GM10248 (cell line): ENCODE measurements at regions of chr11 and their contacts with region 1.

Region 1: GRCh38 chr11:73177778-73178577 is 35.9 kb upstream of the FCHSD2 start:
- DNase-seq: peak; percentile 90
- CTCF ChIP-seq: peak; percentile 81

Region 2: GRCh38 chr11:72722050-72722748 is 455.8 kb before region 1 on chr11:
- CTCF ChIA-PET with region 1: interaction called, 61 read pairs
- POLR2A ChIA-PET with region 1: no interaction called
- DNase-seq: peak; percentile 94
- CTCF ChIP-seq: no peak

Region 3: GRCh38 chr11:72840780-72841179 is 337.2 kb before region 1 on chr11:
- CTCF ChIA-PET with region 1: interaction called, 15 read pairs
- POLR2A ChIA-PET with region 1: interaction called, 3 read pairs
- DNase-seq: no peak
- CTCF ChIP-seq: no peak

Region 4: DNA sequence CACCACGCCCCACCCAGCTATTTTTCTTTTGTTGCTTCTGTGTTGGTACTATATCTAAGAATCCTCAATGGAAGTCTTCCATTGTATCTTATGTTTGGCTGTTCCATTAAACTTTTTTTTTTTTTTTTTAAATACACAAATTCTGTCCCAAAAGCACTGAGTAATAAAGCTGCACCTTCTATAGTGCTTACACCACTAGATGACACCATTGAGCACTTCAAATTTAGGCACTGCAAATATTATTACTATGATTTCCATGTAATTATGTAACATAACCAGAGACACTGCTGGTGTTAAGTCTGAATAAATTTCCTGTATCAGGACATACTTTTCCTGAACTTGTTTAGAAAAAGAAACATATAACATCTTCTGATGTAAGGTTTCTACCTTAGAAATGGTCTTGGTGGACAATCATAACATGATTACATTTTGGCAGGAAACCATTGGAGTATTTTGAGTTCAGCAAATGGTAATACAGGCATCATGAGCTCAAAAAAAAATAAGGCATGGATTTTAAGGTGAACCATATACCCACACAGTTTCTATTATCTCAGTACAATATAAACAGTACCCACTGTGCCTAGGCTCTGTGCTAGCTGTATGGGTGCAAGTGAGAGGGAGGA is 253.3 kb before region 1 on chr11:
- CTCF ChIA-PET with region 1: interaction called, 22 read pairs
- POLR2A ChIA-PET with region 1: no interaction called
- DNase-seq: peak; percentile 31
- CTCF ChIP-seq: peak; percentile 48

Region 5: DNA sequence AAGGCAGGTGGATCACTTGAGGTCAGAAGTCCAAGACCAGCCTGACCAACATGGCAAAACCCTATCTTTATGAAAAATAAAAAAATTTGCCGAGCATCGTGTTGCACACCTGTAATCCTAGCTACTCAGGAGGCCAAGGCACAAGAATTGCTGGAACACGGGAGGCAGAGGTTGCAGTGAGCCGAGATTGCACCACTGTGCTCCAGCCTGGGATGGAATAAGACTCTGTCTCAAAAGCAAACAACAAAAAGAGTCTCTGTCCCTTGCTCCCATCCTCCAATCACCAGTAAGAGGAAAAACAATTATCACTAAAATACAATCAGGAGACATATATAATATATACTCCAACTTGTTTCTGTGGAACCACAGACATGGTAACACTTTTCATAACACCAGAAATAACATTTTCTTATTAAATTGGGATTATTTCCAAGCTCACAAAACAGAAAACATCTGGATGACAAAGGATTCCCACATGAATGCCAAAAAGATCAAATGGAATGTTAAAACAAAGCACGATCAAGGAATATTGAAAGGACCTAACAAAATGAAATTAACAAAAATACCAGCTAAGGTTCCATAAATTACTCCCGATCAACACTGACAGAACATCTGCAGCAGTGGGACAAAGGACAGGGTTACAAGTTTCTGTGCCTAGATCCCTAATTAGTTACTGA is 51.0 kb before region 1 on chr11:
- CTCF ChIA-PET with region 1: no interaction called
- POLR2A ChIA-PET with region 1: no interaction called
- DNase-seq: no peak
- CTCF ChIP-seq: no peak

Region 6: DNA sequence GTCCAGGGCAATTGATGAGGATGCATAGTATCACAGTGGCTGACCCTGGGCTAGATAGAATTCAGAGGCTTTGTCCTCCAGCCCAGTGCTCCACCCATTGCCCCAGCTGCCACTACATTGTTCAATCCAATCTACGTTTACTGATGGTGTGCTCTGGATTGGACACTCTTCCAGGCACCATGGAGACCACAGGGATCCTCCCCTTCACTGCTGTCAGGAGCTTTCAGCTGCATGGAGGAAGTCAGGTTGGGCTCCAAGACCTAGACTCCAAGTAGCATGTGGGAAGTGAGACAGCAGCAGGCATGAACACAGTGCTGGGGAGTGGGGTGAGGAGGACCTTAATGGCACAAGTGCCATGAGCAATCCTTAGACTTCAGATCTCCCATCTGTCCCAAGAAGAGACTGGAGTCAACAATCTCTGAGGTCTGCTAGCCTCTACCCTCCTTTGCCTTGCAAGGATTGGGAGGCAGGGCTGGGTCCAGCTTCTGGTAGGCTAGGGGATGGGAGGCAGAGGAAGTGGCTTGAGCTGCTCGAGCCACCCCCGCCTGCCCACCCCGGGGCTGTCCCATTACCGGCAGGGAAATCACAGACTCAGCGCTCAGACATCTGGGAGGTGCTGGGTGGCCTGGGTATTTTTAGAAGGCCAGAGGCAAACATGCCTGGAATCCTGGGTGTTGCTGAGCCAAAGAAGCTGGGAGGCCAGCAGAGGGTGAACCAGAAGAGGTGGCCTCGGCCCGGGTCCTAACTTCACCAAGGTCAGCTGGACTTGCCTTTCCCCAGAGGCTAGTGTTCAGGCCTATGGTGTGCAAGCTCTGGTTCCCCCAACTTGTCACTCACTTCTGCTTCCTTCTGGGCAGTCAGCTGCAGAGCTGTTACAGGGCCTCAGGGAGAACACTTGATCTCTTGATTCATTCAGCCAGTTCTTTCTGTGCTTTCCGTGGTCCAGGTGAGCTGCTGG is 20.6 kb before region 1 on chr11:
- CTCF ChIA-PET with region 1: interaction called, 115 read pairs
- POLR2A ChIA-PET with region 1: no interaction called
- DNase-seq: peak; percentile 77
- CTCF ChIP-seq: no peak

Region 7: GRCh38 chr11:73236854-73237253 is 58.9 kb after region 1 on chr11:
- CTCF ChIA-PET with region 1: interaction called, 90 read pairs
- POLR2A ChIA-PET with region 1: no interaction called
- DNase-seq: peak; percentile 79
- CTCF ChIP-seq: peak; percentile 83